ENCODE measurements at regions of chr22 and their contacts with region 1.

Region 1: GRCh38 chr22:49936018-49936952 is 17.9 kb downstream of the CRELD2 start:
- DNase-seq: peak; percentile 75 to 97
- H3K4me3 ChIP-seq: peak overlapping the region; percentile 53; the same call in 1 of the 2 replicates
- H3K27ac ChIP-seq: no peak overlapping the region
- H3K4me1 ChIP-seq: peaks cover 26% of the 10 kb centered on the region
- H3K27me3 ChIP-seq: no peaks in the 10 kb centered on the region
- CTCF ChIP-seq: no peak

Region 2: DNA sequence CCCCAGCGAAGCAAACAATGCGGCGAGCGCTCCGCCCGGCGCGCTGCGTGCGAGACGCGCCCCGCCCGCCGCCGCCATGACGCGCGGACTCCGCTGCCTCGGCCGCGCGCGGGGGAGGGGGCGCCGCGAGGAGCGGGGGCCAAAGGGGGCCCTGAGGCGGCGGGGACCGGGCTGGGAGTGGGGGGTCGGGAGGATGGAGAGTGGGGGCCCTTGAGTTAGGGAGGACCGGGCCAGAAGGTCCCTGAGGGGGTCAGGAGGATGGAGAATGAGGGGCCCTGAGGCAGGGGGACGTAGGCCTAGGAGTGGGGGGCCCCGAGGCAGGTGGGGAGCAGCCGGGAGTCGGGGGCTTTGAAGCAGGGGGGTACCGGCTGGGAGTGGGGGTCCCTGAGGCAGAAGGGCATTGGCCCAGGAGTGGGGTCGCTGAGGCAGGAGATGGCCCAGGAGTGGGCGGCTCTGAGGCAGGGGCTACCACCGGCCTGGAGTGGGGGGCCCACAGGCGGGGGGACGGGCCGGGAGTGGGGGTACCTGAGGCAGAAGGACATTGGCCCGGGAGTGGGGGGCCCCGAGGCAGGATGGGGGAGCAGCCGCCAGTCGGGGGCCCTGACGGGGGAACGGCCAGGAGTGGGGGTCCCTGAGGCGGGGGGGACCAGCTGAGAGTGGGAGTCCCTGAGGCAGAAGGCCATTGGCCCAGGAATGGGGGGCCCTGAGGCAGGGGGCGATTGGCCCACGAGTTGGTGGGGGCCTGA is 108.3 kb before region 1 on chr22 and contains the start of gene BRD1:
- CTCF ChIA-PET with region 1: no interaction called
- POLR2A ChIA-PET with region 1: interaction called, 21 read pairs
- intact Hi-C with region 1: no loop called
- DNase-seq: no peak
- H3K4me3 ChIP-seq: peak within 1 kb of the TSS; percentile 90
- H3K27ac ChIP-seq: peak within 1 kb of the TSS; percentile 40; the same call in 1 of the 2 replicates
- H3K4me1 ChIP-seq: peaks cover 25% of the 10 kb centered on the region
- H3K27me3 ChIP-seq: no peaks in the 10 kb centered on the region
- CTCF ChIP-seq: no peak
- total RNA-seq, gene BRD1: 28.5 and 30.9 TPM in 2 replicates

Region 3: DNA sequence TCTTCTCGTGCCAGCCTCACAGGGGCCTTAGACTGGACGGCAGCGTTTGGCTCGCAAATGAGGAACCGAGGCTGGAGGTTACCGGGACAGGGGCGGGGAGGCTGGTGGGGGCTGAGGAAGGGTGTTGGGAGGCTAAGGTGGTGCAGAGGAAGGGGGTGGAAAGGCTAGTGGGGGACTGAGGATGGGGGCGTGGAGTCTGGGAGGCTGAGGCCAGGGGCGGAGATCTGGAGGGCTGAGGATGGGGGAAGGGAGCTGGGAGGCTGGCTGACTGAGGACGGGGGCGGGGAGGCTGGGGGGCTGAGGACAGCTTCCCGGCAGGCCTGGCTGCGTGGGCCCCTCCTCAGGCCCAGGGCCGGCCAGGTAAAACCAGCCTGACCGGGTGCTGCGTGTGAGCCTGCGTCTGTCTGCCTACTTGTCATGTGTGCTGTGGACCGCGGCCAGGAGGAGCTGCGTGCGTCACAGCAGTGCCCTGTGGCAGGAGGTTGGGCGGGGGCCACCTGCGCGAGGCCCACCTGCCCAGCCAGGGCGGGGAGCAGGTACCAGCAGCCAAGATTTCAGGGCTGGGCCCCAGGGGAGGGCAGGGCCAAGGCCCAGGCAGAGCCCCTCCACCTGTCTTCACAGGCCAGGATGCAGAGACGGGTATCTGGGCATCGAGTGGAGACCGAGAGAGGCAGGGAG is 14.9 kb after region 1 on chr22:
- CTCF ChIA-PET with region 1: interaction called, 7 read pairs
- POLR2A ChIA-PET with region 1: interaction called, 9 read pairs
- intact Hi-C with region 1: loop called (anchors 1 kb)
- DNase-seq: peak; percentile 88 to 98
- H3K4me3 ChIP-seq: no peak overlapping the region
- H3K27ac ChIP-seq: peak overlapping the region; percentile 57
- H3K4me1 ChIP-seq: peaks cover 43% of the 10 kb centered on the region
- H3K27me3 ChIP-seq: no peaks in the 10 kb centered on the region
- CTCF ChIP-seq: no peak

Region 4: GRCh38 chr22:49960159-49961004 is 24.1 kb after region 1 on chr22 and contains the start of gene PIM3:
- CTCF ChIA-PET with region 1: interaction called, 12 read pairs
- POLR2A ChIA-PET with region 1: interaction called, 10 read pairs
- intact Hi-C with region 1: loop called (anchors 1 kb)
- DNase-seq: peak; percentile 95 to 96
- H3K4me3 ChIP-seq: peak within 1 kb of the TSS; percentile 97
- H3K27ac ChIP-seq: peak within 1 kb of the TSS; percentile 66
- H3K4me1 ChIP-seq: peaks cover 36% of the 10 kb centered on the region
- H3K27me3 ChIP-seq: no peaks in the 10 kb centered on the region
- CTCF ChIP-seq: no peak
- total RNA-seq, gene PIM3: 67.0 and 84.8 TPM in 2 replicates

Measured in PC-9 (cell line).